Dendritic cell treated with granulocyte-macrophage colony-stimulating factor and Interleukin-4, amounts not matched to agents 40 ng/mL and 50 ng/mL, for 4 days (primary cell): ENCODE measurements at regions of chr11 and their contacts with region 1.

Region 1: GRCh38 chr11:74739546-74740270 is 8.5 kb upstream of the CHRDL2 start:
- H3K4me3 Mint-ChIP-seq: no peak overlapping the region
- H3K27ac Mint-ChIP-seq: no peak overlapping the region
- H3K4me1 Mint-ChIP-seq: peaks cover 38% of the 10 kb centered on the region
- H3K27me3 Mint-ChIP-seq: peaks cover 24% of the 10 kb centered on the region

Region 2: DNA sequence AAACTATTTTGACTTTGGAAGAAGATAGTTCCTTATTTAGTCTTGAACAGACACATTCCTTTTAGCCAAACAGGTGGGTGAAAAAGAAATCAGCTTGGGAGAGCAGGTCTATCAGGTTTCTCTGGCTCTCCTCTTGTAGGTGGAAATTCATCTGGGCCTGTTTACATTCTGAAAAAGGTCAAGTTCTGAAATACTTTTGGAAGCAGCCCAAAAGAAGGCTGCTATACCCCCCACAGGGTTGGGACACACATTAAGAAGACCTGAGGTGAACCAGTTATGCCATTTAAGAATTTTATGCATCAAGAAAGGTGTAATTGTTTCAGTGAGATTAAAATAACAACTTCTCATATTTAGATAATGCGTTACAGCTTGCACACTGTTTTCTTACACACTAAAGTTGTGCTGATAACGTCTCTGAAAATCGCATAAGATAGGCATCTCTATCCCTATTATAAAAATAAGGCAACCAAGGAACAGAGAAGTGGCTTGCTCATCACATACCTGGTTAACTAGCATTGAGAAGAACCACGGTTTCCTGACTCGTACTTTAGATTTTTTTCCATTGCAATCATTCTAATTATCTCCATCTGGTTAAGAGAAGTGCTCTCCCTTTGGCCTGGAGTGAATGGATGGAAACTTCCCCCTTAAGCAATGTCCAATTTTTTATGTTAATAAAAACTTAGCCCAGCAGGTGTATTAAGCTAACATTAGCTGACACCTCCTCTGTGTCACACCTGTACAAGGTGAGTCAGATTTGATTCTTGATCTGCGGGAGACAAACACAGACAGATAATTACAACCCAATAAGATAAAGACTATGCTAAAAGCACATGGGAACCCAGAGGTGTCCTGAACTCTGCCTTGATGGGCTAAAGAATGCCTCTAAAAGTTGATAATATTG is 670.3 kb before region 1 on chr11:
- intact Hi-C with region 1: no loop called
- H3K4me3 Mint-ChIP-seq: no peak overlapping the region
- H3K27ac Mint-ChIP-seq: no peak overlapping the region
- H3K4me1 Mint-ChIP-seq: no peaks in the 10 kb centered on the region
- H3K27me3 Mint-ChIP-seq: no peaks in the 10 kb centered on the region

Region 3: GRCh38 chr11:74687237-74688023 is 52.3 kb before region 1 on chr11:
- intact Hi-C with region 1: loop called (anchors 5 kb)
- H3K4me3 Mint-ChIP-seq: no peak overlapping the region
- H3K27ac Mint-ChIP-seq: peak overlapping the region; percentile 90
- H3K4me1 Mint-ChIP-seq: peaks cover 58% of the 10 kb centered on the region
- H3K27me3 Mint-ChIP-seq: peaks cover 16% of the 10 kb centered on the region

Region 4: DNA sequence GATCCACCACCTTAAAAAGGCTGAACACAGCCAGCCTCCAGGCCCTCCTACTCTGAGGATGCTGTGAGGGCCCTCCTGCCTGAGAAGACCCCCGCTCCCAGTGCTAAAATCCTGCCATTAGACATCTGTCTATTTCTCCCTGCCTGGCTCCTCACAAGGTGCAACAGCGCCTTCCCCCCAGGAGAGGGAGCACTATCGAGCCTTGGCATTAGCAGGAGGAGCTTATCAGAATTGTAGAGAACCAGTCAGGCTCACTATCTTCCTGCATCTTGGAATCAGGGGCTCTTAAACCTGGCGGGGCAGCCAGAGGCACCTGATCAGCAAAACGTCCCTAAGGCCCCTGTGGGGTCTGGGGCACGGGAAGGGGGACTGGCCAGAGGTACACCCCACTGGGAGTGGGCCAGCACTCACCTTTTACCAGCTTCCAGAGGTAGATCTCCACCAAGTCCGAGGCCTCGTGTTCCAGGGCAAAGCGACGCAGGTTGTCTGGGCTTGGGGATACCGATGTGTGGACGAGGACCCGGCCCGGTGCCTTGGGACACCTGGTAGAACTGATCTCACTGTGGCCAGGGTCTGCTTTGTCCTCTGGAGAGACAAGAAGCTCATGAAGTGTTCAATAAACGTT is 37.2 kb before region 1 on chr11:
- intact Hi-C with region 1: loop called (anchors 2 kb)
- H3K4me3 Mint-ChIP-seq: no peak overlapping the region
- H3K27ac Mint-ChIP-seq: no peak overlapping the region
- H3K4me1 Mint-ChIP-seq: peaks cover 5% of the 10 kb centered on the region
- H3K27me3 Mint-ChIP-seq: peaks cover 10% of the 10 kb centered on the region